Astrocyte of the cerebellum (primary cell): ENCODE measurements at regions of chr14 and their contacts with region 1.

Region 1: GRCh38 chr14:68563246-68564131 is 229.4 kb downstream of the ZFP36L1 start:
- DNase-seq: no peak
- H3K4me3 ChIP-seq: no peak overlapping the region
- CTCF ChIP-seq: no peak

Region 2: GRCh38 chr14:68458840-68459469 is 104.5 kb before region 1 on chr14:
- in situ Hi-C with region 1: no loop called
- DNase-seq: peak; percentile 70
- H3K4me3 ChIP-seq: no peak overlapping the region
- CTCF ChIP-seq: no peak

Region 3: DNA sequence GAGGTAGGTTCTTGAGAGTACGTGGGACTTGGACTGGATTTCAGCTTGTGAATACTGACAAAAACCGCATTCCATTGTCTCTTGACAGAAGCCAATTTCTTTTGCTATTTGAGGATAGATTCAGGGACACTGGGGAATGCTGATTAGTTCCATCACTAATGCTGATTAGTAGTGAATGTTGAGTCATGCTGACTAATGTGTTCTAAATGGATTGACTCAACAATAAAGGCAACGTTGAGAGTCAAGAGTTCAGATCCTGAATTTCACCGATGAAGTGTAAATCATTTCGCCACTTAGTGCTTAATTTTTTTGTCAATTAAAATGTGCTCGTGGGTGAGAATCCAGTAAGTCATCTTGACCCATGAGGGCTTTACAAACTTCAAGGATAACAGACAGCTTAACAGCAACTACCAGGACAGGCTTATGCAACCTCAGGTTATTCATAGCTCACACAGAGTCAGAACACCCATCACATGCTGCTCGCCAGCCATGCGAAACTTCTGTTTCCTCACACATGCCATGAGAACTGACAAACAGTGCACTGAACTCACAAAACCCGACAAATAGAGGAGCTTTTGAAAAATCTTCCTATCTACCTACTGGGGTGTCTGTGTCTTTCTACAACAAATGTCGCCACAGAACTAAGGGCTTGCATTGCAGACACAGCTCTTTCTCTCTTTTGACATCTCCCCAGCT is 87.1 kb before region 1 on chr14:
- in situ Hi-C with region 1: no loop called
- DNase-seq: peak; percentile 85
- H3K4me3 ChIP-seq: no peak overlapping the region
- CTCF ChIP-seq: no peak

Region 4: GRCh38 chr14:68506021-68506644 is 57.4 kb before region 1 on chr14:
- in situ Hi-C with region 1: loop called (anchors 10 kb)
- DNase-seq: peak; percentile 15
- H3K4me3 ChIP-seq: no peak overlapping the region
- CTCF ChIP-seq: no peak